Calu3 (cell line): ENCODE measurements at regions of chrX and their contacts with region 1.

Region 1: DNA sequence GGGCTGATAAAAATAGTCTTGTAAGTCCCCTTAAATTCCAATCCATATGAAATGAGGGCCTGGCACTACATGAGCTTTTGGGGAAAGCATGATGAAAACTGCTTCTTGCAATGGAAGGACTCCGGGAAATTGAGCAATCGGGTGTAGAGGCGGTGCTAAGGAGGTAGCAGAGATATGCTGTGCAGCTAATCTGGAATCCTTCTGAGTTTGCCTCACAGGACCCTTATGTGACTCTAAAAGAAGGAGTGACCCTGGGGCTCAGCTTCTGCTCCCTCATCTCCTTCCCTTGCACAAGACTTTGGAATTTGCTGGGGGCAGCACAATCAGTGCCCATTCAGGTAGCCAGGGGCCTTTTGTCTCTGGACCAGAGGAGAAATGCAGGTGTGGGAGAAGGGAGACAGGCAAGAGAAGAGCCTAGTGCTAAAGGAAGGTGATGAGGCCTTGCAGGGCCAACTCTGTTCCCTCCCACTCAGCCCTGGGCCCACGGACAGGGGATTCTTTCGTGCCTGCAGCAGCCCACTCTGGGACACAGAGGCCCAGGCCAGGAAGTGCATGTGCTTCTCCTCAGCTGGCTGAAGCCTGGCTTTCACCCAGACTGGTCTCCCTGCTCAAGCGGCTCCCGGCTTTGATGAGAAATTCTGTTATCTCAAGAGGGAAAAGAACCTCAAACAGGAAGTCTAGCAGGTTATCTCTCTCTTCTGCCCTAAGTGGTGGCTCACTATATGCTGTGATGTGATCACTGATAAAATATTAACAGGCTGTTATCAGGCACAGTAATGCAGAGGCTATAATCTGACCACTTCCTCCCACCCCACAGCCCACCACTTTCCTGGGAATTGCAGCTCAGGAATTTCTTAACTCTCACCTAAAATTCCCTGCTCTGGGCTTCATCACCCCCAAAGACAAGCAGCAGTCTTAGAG is 13.1 kb downstream of the CLDN2 start:
- DNase-seq: peak; percentile 36
- H3K4me3 Mint-ChIP-seq: peak overlapping the region; percentile 39
- H3K27ac Mint-ChIP-seq: peak overlapping the region; percentile 88
- H3K4me1 Mint-ChIP-seq: peaks cover 44% of the 10 kb centered on the region
- H3K27me3 Mint-ChIP-seq: no peaks in the 10 kb centered on the region
- CTCF ChIP-seq: no peak

Region 2: GRCh38 chrX:106917830-106918500 is 15.3 kb before region 1 on chrX:
- CTCF ChIA-PET with region 1: interaction called, 9 read pairs
- intact Hi-C with region 1: loop called (anchors 2 kb)
- DNase-seq: peak; percentile 76
- H3K4me3 Mint-ChIP-seq: peak overlapping the region; percentile 4
- H3K27ac Mint-ChIP-seq: peak overlapping the region; percentile 75
- H3K4me1 Mint-ChIP-seq: peaks cover 38% of the 10 kb centered on the region
- H3K27me3 Mint-ChIP-seq: no peaks in the 10 kb centered on the region
- CTCF ChIP-seq: no peak

Region 3: DNA sequence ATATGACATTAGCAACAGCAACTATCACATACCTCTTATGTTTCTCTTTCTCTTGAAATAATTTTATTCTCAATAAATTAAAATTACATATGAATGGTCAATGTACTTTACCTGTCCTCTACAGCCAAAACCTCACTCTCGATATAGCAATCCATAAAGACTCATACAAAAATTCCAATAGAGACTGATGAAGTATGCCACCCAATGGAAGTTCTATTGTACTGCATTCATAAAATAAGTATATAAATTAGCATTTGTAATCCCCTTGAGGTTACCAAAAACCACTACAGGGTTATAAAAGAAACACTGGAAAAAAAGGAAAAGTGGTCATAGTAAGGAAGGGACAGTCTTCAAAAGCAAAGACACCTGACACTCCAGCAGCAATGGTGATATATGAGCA is 19.7 kb after region 1 on chrX:
- CTCF ChIA-PET with region 1: interaction called, 4 read pairs
- intact Hi-C with region 1: loop called (anchors 2 kb)
- DNase-seq: no peak
- H3K4me3 Mint-ChIP-seq: no peak overlapping the region
- H3K27ac Mint-ChIP-seq: no peak overlapping the region
- H3K4me1 Mint-ChIP-seq: peaks cover 40% of the 10 kb centered on the region
- H3K27me3 Mint-ChIP-seq: no peaks in the 10 kb centered on the region
- CTCF ChIP-seq: peak; percentile 20